Left ventricle myocardium superior (tissue), 1 donor: ENCODE measurements at regions of chr4 and their contacts with region 1.

Region 1: GRCh38 chr4:15655229-15656037 is at the start of gene FBXL5:
- DNase-seq: peak; percentile 92
- ATAC-seq: peak; percentile 88
- total RNA-seq, gene FBXL5: 101 TPM

Region 2: GRCh38 chr4:15488658-15489470 is 166.6 kb before region 1 on chr4:
- intact Hi-C with region 1: loop called (anchors 10 kb)
- DNase-seq: no peak
- ATAC-seq: peak; percentile 85